CD8-positive, alpha-beta T cell (primary cell): ENCODE measurements at regions of chr18 and their contacts with region 1.

Region 1: GRCh38 chr18:35484034-35484433 is 13.7 kb downstream of the INO80C start:
- DNase-seq: no peak
- ATAC-seq: no peak
- H3K4me3 ChIP-seq: no peak overlapping the region
- H3K4me3 Mint-ChIP-seq: no peak overlapping the region
- H3K27ac ChIP-seq: no peak overlapping the region
- H3K27ac Mint-ChIP-seq: no peak overlapping the region
- H3K4me1 ChIP-seq: no peaks in the 10 kb centered on the region
- H3K4me1 Mint-ChIP-seq: peaks cover 11% of the 10 kb centered on the region
- H3K27me3 ChIP-seq: no peaks in the 10 kb centered on the region
- H3K27me3 Mint-ChIP-seq: no peaks in the 10 kb centered on the region
- CTCF ChIP-seq: no peak

Region 2: GRCh38 chr18:34643989-34644388 is 840.0 kb before region 1 on chr18:
- CTCF ChIA-PET with region 1: no interaction called
- POLR2A ChIA-PET with region 1: no interaction called
- intact Hi-C with region 1: no loop called
- DNase-seq: no peak
- ATAC-seq: no peak
- H3K4me3 ChIP-seq: no peak overlapping the region
- H3K4me3 Mint-ChIP-seq: no peak overlapping the region
- H3K27ac ChIP-seq: no peak overlapping the region
- H3K27ac Mint-ChIP-seq: no peak overlapping the region
- H3K4me1 ChIP-seq: no peaks in the 10 kb centered on the region
- H3K4me1 Mint-ChIP-seq: no peaks in the 10 kb centered on the region
- H3K27me3 ChIP-seq: no peaks in the 10 kb centered on the region
- H3K27me3 Mint-ChIP-seq: peaks cover 2% of the 10 kb centered on the region
- CTCF ChIP-seq: no peak

Region 3: DNA sequence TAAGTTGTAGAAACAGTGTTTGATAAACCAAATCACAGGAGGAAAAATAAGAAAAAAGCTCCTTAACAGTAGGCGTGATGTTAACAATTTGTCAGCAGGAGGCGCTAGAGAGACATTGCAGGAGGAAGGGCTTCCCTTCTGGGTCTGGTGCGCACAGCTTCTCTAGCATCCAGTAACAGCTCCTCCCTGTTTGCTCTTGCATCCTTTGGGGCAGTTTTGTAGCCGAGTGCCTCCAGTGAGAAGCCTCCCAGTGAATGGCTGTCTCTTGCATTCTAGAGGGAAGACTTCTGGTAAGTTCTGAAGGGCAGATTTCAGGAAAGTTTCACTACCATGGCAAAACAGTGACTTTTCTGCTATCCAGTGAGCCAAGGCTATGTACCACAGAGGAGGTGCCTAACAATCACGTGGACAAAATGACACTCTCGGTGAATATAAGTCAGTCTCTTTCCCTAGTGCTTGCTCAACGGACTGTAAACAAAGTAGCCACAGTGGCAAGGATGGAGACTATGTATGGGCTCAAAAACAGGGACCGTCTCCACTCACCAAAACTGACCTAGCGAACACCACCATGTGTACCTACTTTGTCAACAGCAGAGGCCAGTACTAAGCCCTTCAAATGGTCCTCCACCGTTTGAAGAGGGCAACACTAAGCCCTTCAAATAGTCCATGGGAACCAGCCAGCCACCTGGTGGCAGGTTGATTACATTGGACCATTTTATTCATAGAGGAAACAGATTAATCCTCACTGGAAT is 97.3 kb before region 1 on chr18:
- CTCF ChIA-PET with region 1: no interaction called
- POLR2A ChIA-PET with region 1: no interaction called
- intact Hi-C with region 1: no loop called
- DNase-seq: peak; percentile 18 to 88 (median 64)
- ATAC-seq: peak; percentile 99
- H3K4me3 ChIP-seq: no peak overlapping the region
- H3K4me3 Mint-ChIP-seq: no peak overlapping the region
- H3K27ac ChIP-seq: no peak overlapping the region
- H3K27ac Mint-ChIP-seq: no peak overlapping the region
- H3K4me1 ChIP-seq: no peaks in the 10 kb centered on the region
- H3K4me1 Mint-ChIP-seq: peaks cover 2% of the 10 kb centered on the region
- H3K27me3 ChIP-seq: peaks cover 0 to 4% of the 10 kb centered on the region in 2 experiments
- H3K27me3 Mint-ChIP-seq: peaks cover 19% of the 10 kb centered on the region
- CTCF ChIP-seq: peak; percentile 96

Region 4: GRCh38 chr18:35413163-35413511 is 70.9 kb before region 1 on chr18:
- CTCF ChIA-PET with region 1: no interaction called
- POLR2A ChIA-PET with region 1: no interaction called
- intact Hi-C with region 1: loop called in 1 of 2 experiments (anchors 1 kb)
- DNase-seq: no peak
- ATAC-seq: no peak
- H3K4me3 ChIP-seq: no peak overlapping the region
- H3K4me3 Mint-ChIP-seq: no peak overlapping the region
- H3K27ac ChIP-seq: no peak overlapping the region
- H3K27ac Mint-ChIP-seq: no peak overlapping the region
- H3K4me1 ChIP-seq: peaks cover 9% of the 10 kb centered on the region
- H3K4me1 Mint-ChIP-seq: peaks cover 25% of the 10 kb centered on the region
- H3K27me3 ChIP-seq: no peaks in the 10 kb centered on the region
- H3K27me3 Mint-ChIP-seq: no peaks in the 10 kb centered on the region
- CTCF ChIP-seq: no peak

Region 5: DNA sequence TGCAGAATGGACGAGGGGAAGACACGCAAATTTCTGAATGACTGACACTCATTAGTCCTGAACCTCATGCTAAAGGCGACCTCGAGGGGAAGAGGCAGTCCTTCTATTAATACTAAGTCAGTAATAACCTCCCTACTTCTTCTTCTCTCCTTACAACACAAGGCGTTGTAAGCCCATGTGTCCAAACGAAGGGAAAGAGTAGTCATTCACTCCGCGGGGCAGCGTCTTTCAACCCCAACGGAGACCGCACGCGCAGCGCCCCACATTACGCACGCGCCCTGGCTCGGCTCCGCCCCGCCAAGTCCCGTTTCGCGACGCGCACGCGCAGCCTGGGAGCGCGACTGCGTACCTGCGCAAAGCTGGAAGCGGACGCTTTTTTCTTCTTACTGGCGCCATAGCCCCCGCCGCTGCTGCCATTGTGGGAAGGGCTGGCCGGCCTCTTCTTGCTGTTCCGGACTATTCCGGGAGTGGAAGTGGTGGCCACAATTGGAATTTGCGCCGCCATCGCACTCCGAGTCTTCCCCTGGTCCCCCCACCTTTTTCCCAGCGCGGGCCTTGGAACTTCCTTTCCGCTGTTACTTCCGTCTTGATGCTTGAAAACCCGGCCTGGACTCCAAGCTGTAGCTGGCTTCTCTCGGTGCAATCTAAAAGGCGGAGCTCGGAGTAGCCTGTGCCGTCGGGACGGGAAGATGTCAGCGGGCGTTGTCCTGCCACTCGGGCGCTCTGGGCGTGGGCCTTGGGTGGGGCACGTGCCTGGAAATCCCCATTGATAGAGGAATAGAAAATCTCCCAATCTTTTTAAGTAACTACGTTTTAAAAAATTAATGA is 13.6 kb after region 1 on chr18 and contains the start of gene INO80C:
- CTCF ChIA-PET with region 1: no interaction called
- POLR2A ChIA-PET with region 1: no interaction called
- intact Hi-C with region 1: no loop called
- DNase-seq: peak; percentile 80 to 97 (median 92)
- ATAC-seq: peak; percentile 92
- H3K4me3 ChIP-seq: peak within 1 kb of the TSS; percentile 83 to 86
- H3K4me3 Mint-ChIP-seq: peak within 1 kb of the TSS; percentile 93
- H3K27ac ChIP-seq: peak within 1 kb of the TSS; percentile 95 to 97
- H3K27ac Mint-ChIP-seq: peak within 1 kb of the TSS; percentile 98
- H3K4me1 ChIP-seq: peaks cover 17% of the 10 kb centered on the region
- H3K4me1 Mint-ChIP-seq: peaks cover 32% of the 10 kb centered on the region
- H3K27me3 ChIP-seq: no peaks in the 10 kb centered on the region
- H3K27me3 Mint-ChIP-seq: no peaks in the 10 kb centered on the region
- CTCF ChIP-seq: no peak
- total RNA-seq, gene INO80C: 20.1 to 22.1 TPM